ENCODE measurements at regions of chr2 and their contacts with region 1.

Region 1: DNA sequence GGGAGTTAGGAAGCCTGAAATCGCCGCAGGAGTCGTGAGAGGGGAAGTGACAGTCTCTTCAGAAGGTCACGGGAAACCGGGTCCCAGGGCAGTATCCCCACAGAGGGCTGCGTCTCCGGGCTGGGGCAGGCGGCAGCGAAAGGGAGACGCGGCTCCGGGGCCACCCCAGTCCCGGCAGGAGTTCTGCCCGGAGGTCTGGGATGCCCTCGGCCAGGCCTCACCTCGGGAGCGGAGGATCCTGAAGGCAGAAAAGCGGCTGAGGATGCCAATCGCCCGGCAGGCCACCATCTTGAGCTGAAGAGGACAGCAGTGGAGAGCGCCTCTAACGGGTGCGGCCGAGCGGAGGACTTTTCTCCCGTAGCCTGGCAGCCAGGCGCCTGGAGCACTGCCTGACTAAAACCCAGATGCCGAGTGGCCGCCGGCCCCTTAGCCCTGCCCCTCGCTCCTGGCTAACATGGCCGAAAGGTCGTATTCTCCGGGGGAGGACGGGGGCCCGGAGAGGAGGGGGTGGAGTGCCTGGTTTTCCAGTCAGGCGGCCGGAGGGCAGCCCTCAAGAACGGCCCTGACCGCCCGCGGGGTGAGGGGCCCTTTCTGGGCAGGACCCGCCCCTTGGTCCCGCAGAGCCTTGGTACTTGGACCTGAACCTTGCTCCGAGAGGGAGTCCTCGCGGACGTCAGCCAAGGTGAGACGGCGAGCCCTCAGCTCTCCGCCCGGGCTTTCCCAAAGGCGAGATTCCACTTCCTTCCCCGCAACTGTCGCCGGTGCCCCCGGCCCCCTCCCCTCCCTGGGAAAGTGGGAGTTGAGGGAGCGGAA is at the starts of genes HADHA and HADHB:
- DNase-seq: peak; percentile 90
- ATAC-seq: peak; percentile 97
- total RNA-seq, gene HADHA: 107 TPM
- total RNA-seq, gene HADHB: 85.6 TPM

Region 2: GRCh38 chr2:26172871-26173775 is 71.4 kb before region 1 on chr2 and contains the start of gene GAREM2:
- intact Hi-C with region 1: no loop called
- DNase-seq: peak; percentile 47
- ATAC-seq: no peak
- total RNA-seq, gene GAREM2: 6.8 TPM

Region 3: GRCh38 chr2:26327291-26328272 is 83.1 kb after region 1 on chr2:
- intact Hi-C with region 1: loop called (anchors 10 kb)
- DNase-seq: no peak
- ATAC-seq: no peak

Region 4: GRCh38 chr2:28137221-28137620 is 1892.7 kb after region 1 on chr2:
- intact Hi-C with region 1: no loop called
- DNase-seq: no peak
- ATAC-seq: peak; percentile 85

Measured in sciatic nerve (tissue), 2 donors.